Cardiac septum (tissue), 1 donor: ENCODE measurements at regions of chr6 and their contacts with region 1.

Region 1: DNA sequence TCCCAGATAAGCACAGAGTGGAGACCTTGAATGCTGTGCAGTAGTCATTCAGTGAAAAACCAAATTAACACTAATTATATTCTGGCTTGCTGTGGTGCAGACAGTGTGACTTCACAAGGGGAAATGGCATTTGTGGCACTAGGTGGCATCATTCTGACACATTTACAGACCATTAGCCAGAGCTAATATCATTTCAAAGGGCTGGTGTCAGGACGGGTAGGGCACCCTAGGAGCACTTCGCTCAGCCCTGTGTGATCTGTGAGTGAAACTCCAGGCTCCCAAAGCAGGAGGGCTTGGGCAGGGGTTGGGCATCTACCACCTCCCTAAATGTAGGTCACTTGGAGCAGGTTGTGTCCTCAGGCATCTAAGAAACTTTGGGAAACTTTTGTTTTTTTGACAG is 555.8 kb downstream of the PKHD1 start:
- DNase-seq: no peak

Region 2: DNA sequence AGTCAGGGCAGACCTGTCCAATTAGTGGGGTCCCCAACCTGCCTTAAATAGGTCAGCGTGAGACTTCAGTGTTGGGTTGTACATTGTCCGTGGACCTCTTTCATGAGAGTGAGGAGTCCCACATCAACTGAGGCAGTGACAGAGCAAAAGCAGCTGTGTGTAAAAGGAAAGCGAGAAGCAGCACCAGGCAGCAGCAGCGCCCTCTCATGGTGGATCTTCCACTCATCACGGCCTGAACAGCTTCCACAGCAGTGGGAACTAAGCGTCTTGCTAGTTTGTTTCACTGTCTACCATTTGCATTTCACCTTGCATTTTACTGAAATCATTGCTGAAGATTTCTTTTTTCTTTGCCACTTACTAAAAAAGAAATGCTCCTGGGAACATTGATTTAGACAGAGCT is 222.0 kb after region 1 on chr6:
- intact Hi-C with region 1: loop called (anchors 5 kb)
- DNase-seq: no peak